Activated naive CD8-positive, alpha-beta T cell treated with anti-CD3 and anti-CD28 coated beads, Interleukin-2, amount 10 ng/mL, durations not matched to agents 7 days and 5 days (primary cell): ENCODE measurements at regions of chr10 and their contacts with region 1.

Region 1: GRCh38 chr10:96910488-96911395 is 78.6 kb downstream of the LCOR start:
- DNase-seq: no peak
- ATAC-seq: peak; percentile 42
- H3K4me3 Mint-ChIP-seq: no peak overlapping the region
- H3K27ac Mint-ChIP-seq: no peak overlapping the region
- H3K4me1 Mint-ChIP-seq: peaks cover 10% of the 10 kb centered on the region
- H3K27me3 Mint-ChIP-seq: no peaks in the 10 kb centered on the region

Region 2: DNA sequence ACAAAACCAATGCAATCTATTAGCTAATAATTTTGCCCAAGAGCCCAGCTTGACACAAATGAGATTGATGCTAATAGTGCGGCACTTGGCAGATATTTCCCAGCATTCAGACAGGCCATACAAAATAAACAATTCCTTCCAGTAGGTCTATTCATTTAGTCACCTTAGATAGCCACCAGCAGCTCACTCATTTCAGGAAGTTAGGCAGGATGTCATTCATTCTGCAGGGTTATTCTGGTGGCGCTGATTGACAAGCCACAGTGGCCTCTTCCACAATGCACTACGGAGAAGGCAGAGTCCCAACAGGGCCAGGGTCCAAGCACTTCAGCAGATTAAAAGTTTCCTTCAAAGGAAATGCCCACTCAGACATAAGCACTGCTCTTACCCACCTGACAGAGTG is 246.2 kb before region 1 on chr10:
- POLR2A ChIA-PET with region 1: interaction called, 10 read pairs
- DNase-seq: no peak
- ATAC-seq: peak; percentile 78
- H3K4me3 Mint-ChIP-seq: no peak overlapping the region
- H3K27ac Mint-ChIP-seq: no peak overlapping the region
- H3K4me1 Mint-ChIP-seq: peaks cover 19% of the 10 kb centered on the region
- H3K27me3 Mint-ChIP-seq: peaks cover 2% of the 10 kb centered on the region

Region 3: DNA sequence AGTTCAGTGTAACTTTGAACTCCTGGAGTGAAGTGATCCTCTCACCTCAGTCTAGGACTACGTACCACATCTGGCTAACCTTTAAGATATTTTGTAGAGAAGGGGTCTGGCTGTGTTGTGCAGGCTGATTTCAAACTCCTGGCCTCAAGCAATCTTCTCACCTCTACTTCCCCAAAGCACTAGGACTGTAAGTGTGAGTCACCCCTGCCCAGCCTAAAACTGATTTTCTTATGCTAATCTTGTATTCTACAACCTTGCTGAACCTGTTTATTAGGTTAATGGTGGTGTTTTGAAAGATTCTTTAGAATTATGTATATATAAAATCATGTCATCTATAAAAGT is 20.6 kb before region 1 on chr10:
- POLR2A ChIA-PET with region 1: no interaction called
- DNase-seq: no peak
- ATAC-seq: no peak
- H3K4me3 Mint-ChIP-seq: no peak overlapping the region
- H3K27ac Mint-ChIP-seq: no peak overlapping the region
- H3K4me1 Mint-ChIP-seq: peaks cover 15% of the 10 kb centered on the region
- H3K27me3 Mint-ChIP-seq: no peaks in the 10 kb centered on the region